ENCODE measurements at regions of chr1 and their contacts with region 1.

Region 1: DNA sequence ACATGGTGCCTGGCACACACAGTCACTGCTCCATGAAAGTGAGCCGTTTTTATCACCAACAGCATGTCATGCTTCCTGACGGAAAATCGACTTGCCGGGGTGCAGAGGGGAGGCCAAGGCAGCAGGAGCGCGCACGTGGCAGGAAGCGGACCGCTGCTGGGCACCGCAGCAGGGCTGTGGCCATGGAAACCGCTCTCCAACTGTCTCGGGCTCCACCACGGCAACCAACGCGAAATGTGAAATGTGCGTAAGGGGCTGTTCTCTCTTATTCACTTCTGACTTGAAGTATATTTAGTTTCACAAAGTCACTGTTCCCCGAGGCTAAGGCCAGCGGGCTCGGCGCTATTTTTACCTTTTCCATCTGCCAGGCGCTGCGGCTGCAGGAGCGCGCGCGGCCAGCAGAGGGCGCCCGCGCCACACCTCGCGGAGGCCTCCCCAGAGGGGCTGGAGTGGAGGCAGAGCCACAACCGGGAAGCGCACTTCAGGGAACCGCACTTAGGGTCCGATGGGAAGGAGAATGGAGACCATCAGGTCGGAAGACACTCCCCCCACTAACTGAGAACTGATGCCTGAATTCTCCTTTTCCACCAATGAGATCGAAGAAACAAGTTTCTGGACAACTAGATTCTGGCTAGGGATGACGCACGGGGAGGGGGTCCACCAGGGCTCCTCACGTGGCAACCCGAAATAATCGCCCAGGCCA is 19.7 kb downstream of the RCC2 start:
- DNase-seq: peak; percentile 24 to 85 (median 66)
- ATAC-seq: peak; percentile 91
- H3K4me3 ChIP-seq: no peak overlapping the region
- H3K4me3 Mint-ChIP-seq: no peak overlapping the region
- H3K27ac ChIP-seq: no peak overlapping the region
- H3K27ac Mint-ChIP-seq: no peak overlapping the region
- H3K4me1 ChIP-seq: no peaks in the 10 kb centered on the region
- H3K4me1 Mint-ChIP-seq: peaks cover 8% of the 10 kb centered on the region
- H3K27me3 ChIP-seq: no peaks in the 10 kb centered on the region
- H3K27me3 Mint-ChIP-seq: no peaks in the 10 kb centered on the region
- CTCF ChIP-seq: peak; percentile 96

Region 2: GRCh38 chr1:17377334-17377953 is 42.3 kb before region 1 on chr1:
- CTCF ChIA-PET with region 1: no interaction called
- POLR2A ChIA-PET with region 1: no interaction called
- intact Hi-C with region 1: no loop called
- DNase-seq: no peak
- ATAC-seq: no peak
- H3K4me3 ChIP-seq: no peak overlapping the region
- H3K4me3 Mint-ChIP-seq: no peak overlapping the region
- H3K27ac ChIP-seq: no peak overlapping the region
- H3K27ac Mint-ChIP-seq: no peak overlapping the region
- H3K4me1 ChIP-seq: no peaks in the 10 kb centered on the region
- H3K4me1 Mint-ChIP-seq: no peaks in the 10 kb centered on the region
- H3K27me3 ChIP-seq: no peaks in the 10 kb centered on the region
- H3K27me3 Mint-ChIP-seq: peaks cover 19% of the 10 kb centered on the region
- CTCF ChIP-seq: no peak

Region 3: GRCh38 chr1:17460245-17460644 is 40.5 kb after region 1 on chr1:
- CTCF ChIA-PET with region 1: no interaction called
- POLR2A ChIA-PET with region 1: no interaction called
- intact Hi-C with region 1: no loop called
- DNase-seq: no peak
- ATAC-seq: no peak
- H3K4me3 ChIP-seq: no peak overlapping the region
- H3K4me3 Mint-ChIP-seq: no peak overlapping the region
- H3K27ac ChIP-seq: no peak overlapping the region
- H3K27ac Mint-ChIP-seq: no peak overlapping the region
- H3K4me1 ChIP-seq: no peaks in the 10 kb centered on the region
- H3K4me1 Mint-ChIP-seq: no peaks in the 10 kb centered on the region
- H3K27me3 ChIP-seq: no peaks in the 10 kb centered on the region
- H3K27me3 Mint-ChIP-seq: peaks cover 8% of the 10 kb centered on the region
- CTCF ChIP-seq: no peak

Region 4: GRCh38 chr1:17485280-17485679 is 65.5 kb after region 1 on chr1:
- CTCF ChIA-PET with region 1: no interaction called
- POLR2A ChIA-PET with region 1: no interaction called
- intact Hi-C with region 1: loop called (anchors 1 to 2 kb)
- DNase-seq: peak in 2 of 9 experiments; percentile 19 to 21
- ATAC-seq: no peak
- H3K4me3 ChIP-seq: no peak overlapping the region
- H3K4me3 Mint-ChIP-seq: no peak overlapping the region
- H3K27ac ChIP-seq: no peak overlapping the region
- H3K27ac Mint-ChIP-seq: no peak overlapping the region
- H3K4me1 ChIP-seq: no peaks in the 10 kb centered on the region
- H3K4me1 Mint-ChIP-seq: no peaks in the 10 kb centered on the region
- H3K27me3 ChIP-seq: no peaks in the 10 kb centered on the region
- H3K27me3 Mint-ChIP-seq: peaks cover 6% of the 10 kb centered on the region
- CTCF ChIP-seq: no peak

Region 5: DNA sequence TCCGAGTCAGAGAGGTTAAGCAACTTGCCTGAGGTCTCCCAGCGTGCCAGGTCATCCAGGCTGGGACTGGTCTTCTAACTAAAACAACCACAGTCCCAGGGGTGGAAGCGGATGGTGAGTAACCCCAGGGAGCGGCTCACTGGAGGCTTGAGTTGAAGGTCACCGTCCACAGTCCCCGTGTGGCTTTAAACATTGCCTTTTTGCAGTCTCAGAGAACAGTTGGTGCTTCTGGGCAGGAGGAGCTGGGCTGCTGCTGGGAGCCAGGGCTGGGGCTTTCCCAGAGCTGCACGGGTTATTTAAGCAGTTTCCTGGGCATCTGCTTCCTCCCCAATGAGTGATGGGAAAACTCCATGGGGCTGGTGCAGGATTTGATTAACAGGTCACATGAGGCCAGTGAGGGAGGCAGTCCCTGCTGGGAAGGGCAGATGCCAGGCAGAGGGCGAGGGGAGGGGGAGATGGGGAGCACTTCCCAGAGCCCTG is 132.0 kb after region 1 on chr1:
- CTCF ChIA-PET with region 1: no interaction called
- POLR2A ChIA-PET with region 1: no interaction called
- intact Hi-C with region 1: no loop called
- DNase-seq: no peak
- ATAC-seq: no peak
- H3K4me3 ChIP-seq: no peak overlapping the region
- H3K4me3 Mint-ChIP-seq: no peak overlapping the region
- H3K27ac ChIP-seq: no peak overlapping the region
- H3K27ac Mint-ChIP-seq: no peak overlapping the region
- H3K4me1 ChIP-seq: no peaks in the 10 kb centered on the region
- H3K4me1 Mint-ChIP-seq: no peaks in the 10 kb centered on the region
- H3K27me3 ChIP-seq: no peaks in the 10 kb centered on the region
- H3K27me3 Mint-ChIP-seq: peaks cover 3% of the 10 kb centered on the region
- CTCF ChIP-seq: no peak

Region 6: GRCh38 chr1:17587989-17588685 is 168.4 kb after region 1 on chr1:
- CTCF ChIA-PET with region 1: no interaction called
- POLR2A ChIA-PET with region 1: no interaction called
- intact Hi-C with region 1: no loop called
- DNase-seq: no peak
- ATAC-seq: no peak
- H3K4me3 ChIP-seq: no peak overlapping the region
- H3K4me3 Mint-ChIP-seq: no peak overlapping the region
- H3K27ac ChIP-seq: no peak overlapping the region
- H3K27ac Mint-ChIP-seq: no peak overlapping the region
- H3K4me1 ChIP-seq: no peaks in the 10 kb centered on the region
- H3K4me1 Mint-ChIP-seq: no peaks in the 10 kb centered on the region
- H3K27me3 ChIP-seq: no peaks in the 10 kb centered on the region
- H3K27me3 Mint-ChIP-seq: no peaks in the 10 kb centered on the region
- CTCF ChIP-seq: no peak

Region 7: DNA sequence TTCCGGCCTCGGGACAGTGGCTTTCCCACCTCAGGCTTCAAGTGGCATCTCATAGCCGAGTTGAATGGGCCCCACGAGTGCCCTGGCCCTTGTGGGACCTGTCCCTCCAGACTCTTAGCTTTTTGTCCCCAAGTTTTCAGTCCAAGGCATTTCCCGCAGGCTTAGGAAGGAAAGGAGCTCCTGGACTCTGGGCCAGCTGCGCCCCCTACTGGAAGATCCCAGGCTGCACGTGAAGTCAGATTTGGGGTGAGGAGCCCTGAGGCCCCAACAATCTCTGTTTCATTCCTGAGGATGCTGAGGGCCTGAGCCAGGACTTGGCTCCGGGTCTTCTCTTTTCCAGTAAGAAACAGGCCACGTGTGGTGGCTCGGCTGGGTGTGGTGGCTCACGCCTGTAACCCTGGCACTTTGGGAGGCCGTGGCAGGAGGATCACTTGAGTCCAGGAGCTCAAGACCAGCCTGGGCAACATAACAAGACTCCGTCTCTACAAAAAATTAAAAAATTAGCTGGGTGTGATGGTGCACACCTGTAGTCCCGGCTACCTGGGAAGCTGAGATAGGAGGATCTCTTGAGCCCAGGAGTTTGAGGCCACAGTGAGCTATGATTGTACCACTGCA is 187.2 kb after region 1 on chr1:
- CTCF ChIA-PET with region 1: no interaction called
- POLR2A ChIA-PET with region 1: no interaction called
- intact Hi-C with region 1: loop called in 1 of 2 experiments (anchors 10 kb)
- DNase-seq: peak in 4 of 9 experiments; percentile 23 to 32 (median 24)
- ATAC-seq: no peak
- H3K4me3 ChIP-seq: no peak overlapping the region
- H3K4me3 Mint-ChIP-seq: no peak overlapping the region
- H3K27ac ChIP-seq: no peak overlapping the region
- H3K27ac Mint-ChIP-seq: no peak overlapping the region
- H3K4me1 ChIP-seq: no peaks in the 10 kb centered on the region
- H3K4me1 Mint-ChIP-seq: no peaks in the 10 kb centered on the region
- H3K27me3 ChIP-seq: no peaks in the 10 kb centered on the region
- H3K27me3 Mint-ChIP-seq: no peaks in the 10 kb centered on the region
- CTCF ChIP-seq: peak; percentile 29

Measured in CD8-positive, alpha-beta T cell (primary cell).